GM12878 (cell line): ENCODE measurements at regions of chr4 and their contacts with region 1.

Region 1: GRCh38 chr4:76969941-76970529 is 20.5 kb downstream of the SEPTIN11 start:
- DNase-seq: no peak
- ATAC-seq: no peak; the same call in 2 of the 3 replicates
- H3K4me3 ChIP-seq: no peak overlapping the region
- H3K27ac ChIP-seq: no peak overlapping the region
- H3K4me1 ChIP-seq: no peaks in the 10 kb centered on the region; the same call in 1 of the 2 replicates
- H3K27me3 ChIP-seq: no peaks in the 10 kb centered on the region
- CTCF ChIP-seq: no peak
- EP300 ChIP-seq: no peak
- POLR2A ChIP-seq: no peak
- RAD21 ChIP-seq: no peak

Region 2: GRCh38 chr4:76856243-76857073 is 113.6 kb before region 1 on chr4:
- CTCF ChIA-PET with region 1: no interaction called
- POLR2A ChIA-PET with region 1: no interaction called
- RAD21 ChIA-PET with region 1: no interaction called
- SMC1A ChIA-PET with region 1: no interaction called
- in situ Hi-C with region 1: no loop called
- intact Hi-C with region 1: no loop called
- DNase-seq: no peak
- ATAC-seq: no peak
- H3K4me3 ChIP-seq: no peak overlapping the region
- H3K27ac ChIP-seq: no peak overlapping the region
- H3K4me1 ChIP-seq: peaks cover 8% of the 10 kb centered on the region; the same call in 1 of the 2 replicates
- H3K27me3 ChIP-seq: no peaks in the 10 kb centered on the region
- CTCF ChIP-seq: no peak
- EP300 ChIP-seq: no peak
- POLR2A ChIP-seq: no peak
- RAD21 ChIP-seq: no peak

Region 3: GRCh38 chr4:76984127-76984526 is 14.1 kb after region 1 on chr4:
- CTCF ChIA-PET with region 1: interaction called, 13 read pairs
- POLR2A ChIA-PET with region 1: interaction called, 4 read pairs
- RAD21 ChIA-PET with region 1: interaction called, 4 read pairs
- SMC1A ChIA-PET with region 1: interaction called, 7 read pairs
- in situ Hi-C with region 1: no loop called
- intact Hi-C with region 1: no loop called
- DNase-seq: peak; percentile 40
- ATAC-seq: peak; percentile 83
- H3K4me3 ChIP-seq: no peak overlapping the region
- H3K27ac ChIP-seq: peak overlapping the region; percentile 77
- H3K4me1 ChIP-seq: peaks cover 48% of the 10 kb centered on the region
- H3K27me3 ChIP-seq: no peaks in the 10 kb centered on the region
- CTCF ChIP-seq: peak; percentile 40 to 53 (median 40); a peak in 5 of 6 replicates
- EP300 ChIP-seq: no peak; a peak in 1 of 4 replicates
- POLR2A ChIP-seq: no peak
- RAD21 ChIP-seq: peak; percentile 60

Region 4: DNA sequence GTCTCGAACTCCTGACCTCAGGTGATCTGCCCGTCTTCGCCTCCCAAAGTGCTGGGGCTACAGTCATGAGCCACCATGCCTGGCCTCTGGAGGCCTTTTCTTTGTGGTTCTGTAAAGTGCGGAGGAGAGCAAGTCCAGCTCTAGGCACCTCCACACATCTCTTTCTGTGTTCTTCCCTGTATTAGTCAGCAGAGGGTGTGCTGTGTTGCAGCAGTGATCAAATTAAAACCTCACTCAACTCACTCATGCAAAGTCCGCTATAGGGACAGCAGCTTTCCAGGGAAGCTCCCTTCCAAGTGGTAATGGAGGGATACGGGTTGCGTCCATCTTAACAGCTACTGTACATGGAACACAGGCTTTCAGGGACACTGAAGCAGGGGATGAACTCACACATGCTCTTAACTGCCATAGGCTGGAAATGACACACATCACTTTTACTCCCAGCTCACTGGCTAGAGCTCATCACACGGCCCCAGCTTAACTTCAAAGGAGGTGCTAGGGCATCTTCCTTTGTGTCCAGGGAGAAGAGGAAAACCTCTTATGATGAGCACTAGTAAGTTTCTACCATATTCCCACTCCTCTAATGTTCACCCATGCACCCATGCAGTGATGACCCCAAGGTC is 151.0 kb after region 1 on chr4:
- CTCF ChIA-PET with region 1: no interaction called
- POLR2A ChIA-PET with region 1: no interaction called
- RAD21 ChIA-PET with region 1: no interaction called
- SMC1A ChIA-PET with region 1: no interaction called
- in situ Hi-C with region 1: no loop called
- intact Hi-C with region 1: no loop called
- DNase-seq: no peak
- ATAC-seq: peak; percentile 79
- H3K4me3 ChIP-seq: no peak overlapping the region
- H3K27ac ChIP-seq: no peak overlapping the region
- H3K4me1 ChIP-seq: no peaks in the 10 kb centered on the region
- H3K27me3 ChIP-seq: no peaks in the 10 kb centered on the region
- CTCF ChIP-seq: peak; percentile 17 to 38 (median 22); a peak in 4 of 6 replicates
- EP300 ChIP-seq: no peak
- POLR2A ChIP-seq: no peak
- RAD21 ChIP-seq: peak; percentile 52; the same call in 1 of the 2 replicates